ENCODE measurements at regions of chr19 and their contacts with region 1.

Region 1: DNA sequence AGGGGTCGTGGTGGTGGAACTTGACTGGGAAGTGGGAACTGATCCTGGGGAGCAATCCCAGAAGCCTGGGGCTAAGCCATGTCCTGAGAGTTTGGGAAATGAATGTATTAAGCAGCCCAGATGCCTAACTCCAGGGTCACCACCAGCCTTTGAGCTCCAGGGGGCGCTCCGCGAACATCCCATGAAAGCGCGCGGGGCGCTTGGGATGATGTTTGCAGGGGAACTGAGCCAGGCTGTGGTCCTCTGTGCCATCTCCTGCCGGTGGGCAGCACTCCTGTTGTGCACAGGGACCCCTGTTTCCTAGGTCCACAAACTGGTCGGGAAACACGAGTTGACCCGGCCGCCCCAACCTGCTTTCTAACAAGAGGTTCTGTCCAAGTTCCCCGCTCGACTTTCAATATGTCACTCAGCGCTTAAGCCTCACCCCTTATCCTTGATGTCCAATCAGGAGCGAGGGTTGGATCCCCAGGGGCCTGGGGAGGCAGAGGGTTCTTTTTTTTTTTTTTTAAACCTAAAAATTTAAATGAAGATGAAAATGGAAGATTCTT is 14.4 kb downstream of the LEUTX start:
- DNase-seq: peak; percentile 41 to 95
- H3K4me3 ChIP-seq: no peak overlapping the region
- CTCF ChIP-seq: peak in 1 of 3 donors; percentile 62
- POLR2A ChIP-seq: no peak

Region 2: DNA sequence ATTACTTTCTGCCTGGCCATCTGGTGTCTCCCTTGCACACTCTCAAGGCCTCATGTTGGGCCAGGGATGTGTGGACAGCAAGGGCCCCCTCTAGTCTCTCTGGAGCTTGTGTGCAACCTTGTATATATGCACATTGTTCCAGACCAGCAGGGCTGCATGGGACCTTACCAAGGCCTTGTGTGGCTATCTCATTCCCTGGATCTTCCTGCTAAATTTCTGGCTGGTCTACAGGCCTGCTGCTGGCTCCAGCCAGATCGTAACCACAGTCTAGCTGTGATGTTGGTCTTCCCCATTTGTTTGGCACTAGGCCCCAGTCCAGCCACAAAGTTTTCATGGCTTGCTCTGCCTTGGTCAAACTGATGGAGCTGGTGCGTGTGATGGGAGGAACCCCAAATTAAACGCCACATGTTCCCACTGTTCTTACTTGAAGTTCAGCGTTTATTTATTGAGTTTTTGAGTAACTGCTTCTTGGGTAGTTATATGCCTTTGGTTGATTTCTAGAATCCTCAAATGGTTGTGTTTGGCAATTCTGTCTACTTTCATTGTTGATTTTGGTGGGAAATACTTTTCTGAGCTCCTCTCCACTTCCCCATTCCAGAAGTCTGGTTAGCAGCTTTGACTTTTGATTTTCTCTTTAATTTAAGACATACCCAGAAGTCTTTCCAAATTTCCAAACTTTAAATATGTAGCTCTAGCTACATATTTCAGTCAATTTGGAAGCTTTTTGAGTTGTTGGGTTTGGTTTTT is 1829.7 kb before region 1 on chr19:
- intact Hi-C with region 1: loop called (anchors 5 kb)
- DNase-seq: peak in 1 of 2 donors; percentile 63
- H3K4me3 ChIP-seq: no peak overlapping the region
- CTCF ChIP-seq: no peak
- POLR2A ChIP-seq: no peak

Region 3: GRCh38 chr19:39846176-39846677 is 53.2 kb after region 1 on chr19 and contains the start of gene FBL:
- intact Hi-C with region 1: loop called (anchors 5 kb)
- DNase-seq: peak; percentile 93 to 99
- H3K4me3 ChIP-seq: peak within 1 kb of the TSS; percentile 80
- CTCF ChIP-seq: no peak
- POLR2A ChIP-seq: peak in 1 of 2 donors; percentile 1
- total RNA-seq, gene FBL: 167 to 224 (median 174) TPM

Region 4: DNA sequence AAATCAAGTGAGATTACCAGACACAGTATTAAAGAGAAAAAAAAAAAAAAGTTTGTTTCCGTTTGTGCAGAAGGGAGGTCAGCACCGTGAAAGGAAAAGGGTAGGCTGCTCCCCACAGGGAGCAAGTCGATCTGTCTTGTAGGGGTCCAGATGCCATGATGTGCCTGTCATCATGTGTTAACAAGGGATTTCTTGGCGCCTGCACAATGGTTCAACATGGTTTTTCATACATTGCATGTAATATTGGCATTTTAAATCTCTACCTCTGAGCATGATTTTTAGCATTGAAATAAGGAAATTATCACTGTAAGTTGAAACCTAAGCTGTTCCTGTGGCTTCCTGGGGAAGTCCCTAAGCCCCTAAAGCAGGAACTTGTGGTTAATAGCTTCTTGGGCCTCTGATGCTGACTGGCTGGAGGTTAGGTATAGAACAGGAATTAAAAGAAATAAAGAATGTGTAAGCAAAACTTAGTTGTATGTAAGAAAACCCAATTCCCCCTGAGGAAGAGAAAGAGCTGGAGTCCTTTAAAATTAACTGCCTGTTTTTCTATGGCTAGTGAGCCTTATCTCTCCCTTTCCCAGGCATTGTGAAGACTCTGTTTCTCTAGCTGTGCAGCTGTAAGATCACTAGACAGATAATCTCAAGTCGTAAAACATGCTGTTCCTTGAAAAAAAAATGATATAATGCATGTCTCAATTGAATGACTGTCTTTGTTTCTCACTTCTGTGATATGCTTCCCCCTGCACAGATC is 148.7 kb after region 1 on chr19:
- intact Hi-C with region 1: no loop called
- DNase-seq: peak in 1 of 2 donors; percentile 43
- H3K4me3 ChIP-seq: no peak overlapping the region
- CTCF ChIP-seq: no peak
- POLR2A ChIP-seq: no peak

Measured in lower leg skin (tissue), 4 donors.